Lower leg skin (tissue), 4 donors: ENCODE measurements at regions of chr2 and their contacts with region 1.

Region 1: DNA sequence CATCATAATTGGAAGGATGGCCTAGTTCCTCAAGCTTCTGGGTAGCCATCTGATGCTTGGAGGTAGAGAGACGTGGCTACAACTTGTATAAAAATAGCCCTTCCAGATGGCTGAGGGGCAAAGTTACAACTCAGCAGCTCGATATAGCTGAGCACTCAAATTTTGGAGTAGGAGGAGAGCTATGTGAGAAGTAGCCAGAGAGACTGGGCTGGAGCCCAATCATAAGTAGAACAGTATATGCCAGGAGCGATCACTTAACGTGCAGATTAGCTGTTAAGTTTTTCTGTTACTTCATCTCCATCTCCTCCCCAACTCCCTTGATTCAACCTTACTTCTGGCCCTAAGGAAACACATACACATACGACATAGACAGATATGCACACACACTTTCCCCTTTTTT is 28.8 kb downstream of the CNRIP1 start:
- DNase-seq: no peak
- H3K4me3 ChIP-seq: no peak overlapping the region
- CTCF ChIP-seq: no peak
- POLR2A ChIP-seq: no peak

Region 2: GRCh38 chr2:68121873-68122679 is 168.8 kb before region 1 on chr2:
- intact Hi-C with region 1: loop called (anchors 5 kb)
- DNase-seq: peak; percentile 87 to 97
- H3K4me3 ChIP-seq: no peak overlapping the region
- CTCF ChIP-seq: peak in 1 of 3 donors; percentile 94
- POLR2A ChIP-seq: no peak

Region 3: DNA sequence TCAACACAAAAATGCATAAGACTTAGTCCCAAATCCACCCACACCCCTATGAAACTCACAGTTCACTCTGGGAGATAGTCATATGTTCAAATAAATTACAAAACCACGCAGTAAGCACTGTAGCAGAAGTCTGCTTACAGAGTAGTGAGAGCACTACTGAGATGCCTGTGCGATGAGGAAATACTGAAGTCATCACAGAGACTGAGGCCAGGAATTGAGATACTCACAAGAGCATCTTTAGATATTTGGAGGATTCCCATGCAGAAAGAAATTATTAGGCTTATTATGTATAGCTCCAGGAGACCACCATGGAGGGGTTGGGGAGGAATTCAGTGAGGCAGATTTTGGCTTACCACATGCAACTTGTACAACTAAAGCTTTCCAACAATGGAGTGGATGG is 804.4 kb after region 1 on chr2:
- intact Hi-C with region 1: no loop called
- DNase-seq: no peak
- H3K4me3 ChIP-seq: no peak overlapping the region
- CTCF ChIP-seq: no peak
- POLR2A ChIP-seq: no peak